HepG2 (cell line): ENCODE measurements at regions of chr19 and their contacts with region 1.

Region 1: DNA sequence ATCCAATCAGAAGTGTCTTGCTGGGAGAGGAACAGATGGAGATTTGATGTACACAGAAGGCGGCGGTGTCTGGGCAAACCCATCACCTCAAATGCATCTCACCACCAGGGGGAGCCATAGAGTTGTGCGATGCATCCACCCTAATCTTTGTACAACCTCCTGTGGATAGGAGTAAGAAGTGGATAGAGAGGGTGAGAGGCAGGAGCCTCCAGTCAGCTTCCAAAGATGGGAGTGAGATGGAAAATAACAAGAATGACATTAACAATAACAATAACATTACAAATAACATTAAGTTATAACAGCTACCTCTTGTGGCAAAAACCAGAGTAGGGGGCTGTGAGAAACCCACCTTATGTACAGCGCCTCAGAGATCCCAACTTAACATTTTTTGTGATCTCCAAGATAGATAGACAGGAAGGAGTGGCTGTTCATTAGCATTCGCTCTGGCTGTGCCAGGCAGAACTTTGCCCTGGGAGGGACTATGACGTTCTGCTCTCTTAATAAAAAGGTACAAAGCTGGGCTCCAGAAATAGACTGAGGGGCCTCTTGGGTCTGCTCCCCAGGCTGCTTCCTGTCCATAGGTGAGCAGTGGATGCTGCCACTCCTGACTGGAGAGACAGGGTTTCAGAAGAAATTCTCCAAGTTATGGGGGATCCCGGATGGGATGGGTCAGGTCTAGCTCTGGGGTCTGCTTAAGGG is 5.2 kb upstream of the CEACAM18 start:
- DNase-seq: peak; percentile 56
- ATAC-seq: peak; percentile 77
- H3K4me3 ChIP-seq: no peak overlapping the region
- H3K27ac ChIP-seq: no peak overlapping the region
- H3K4me1 ChIP-seq: peaks cover 29% of the 10 kb centered on the region
- H3K27me3 ChIP-seq: no peaks in the 10 kb centered on the region
- CTCF ChIP-seq: peak; percentile 82
- EP300 ChIP-seq: no peak
- POLR2A ChIP-seq: no peak
- RAD21 ChIP-seq: peak; percentile 56

Region 2: DNA sequence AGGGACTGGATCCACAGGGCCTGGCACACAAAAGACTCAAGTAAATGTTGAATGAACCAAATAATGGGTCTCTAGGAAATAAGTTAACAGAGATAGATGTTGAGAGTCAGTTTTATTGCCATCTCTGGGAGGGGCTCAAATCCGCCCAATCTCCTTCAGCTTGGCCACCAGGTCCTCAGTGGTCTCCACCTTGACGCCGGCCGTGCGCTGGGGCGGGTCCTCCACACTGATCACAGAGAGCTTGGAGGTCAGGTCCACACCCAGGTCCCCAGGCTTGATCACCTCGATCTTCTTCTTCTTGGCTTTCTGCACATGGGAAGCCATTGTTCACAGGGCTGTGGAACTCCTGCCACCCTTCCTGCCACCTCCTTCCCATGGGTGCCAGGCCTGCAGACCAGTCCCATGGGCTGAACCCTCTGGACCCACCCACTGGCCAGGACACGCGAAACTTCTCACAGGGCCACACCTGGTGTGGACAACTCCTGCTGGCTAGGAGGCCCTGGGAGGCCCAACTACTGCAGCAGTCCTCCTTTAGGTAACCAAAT is 128.0 kb before region 1 on chr19:
- CTCF ChIA-PET with region 1: no interaction called
- POLR2A ChIA-PET with region 1: no interaction called
- in situ Hi-C with region 1: no loop called
- intact Hi-C with region 1: no loop called
- DNase-seq: no peak
- ATAC-seq: no peak
- H3K4me3 ChIP-seq: no peak overlapping the region
- H3K27ac ChIP-seq: peak overlapping the region; percentile 34
- H3K4me1 ChIP-seq: peaks cover 97% of the 10 kb centered on the region
- H3K27me3 ChIP-seq: no peaks in the 10 kb centered on the region
- CTCF ChIP-seq: no peak
- EP300 ChIP-seq: no peak
- POLR2A ChIP-seq: peak in 1 of 2 experiments; percentile 45; a peak in 2 of 4 replicates
- RAD21 ChIP-seq: no peak

Region 3: DNA sequence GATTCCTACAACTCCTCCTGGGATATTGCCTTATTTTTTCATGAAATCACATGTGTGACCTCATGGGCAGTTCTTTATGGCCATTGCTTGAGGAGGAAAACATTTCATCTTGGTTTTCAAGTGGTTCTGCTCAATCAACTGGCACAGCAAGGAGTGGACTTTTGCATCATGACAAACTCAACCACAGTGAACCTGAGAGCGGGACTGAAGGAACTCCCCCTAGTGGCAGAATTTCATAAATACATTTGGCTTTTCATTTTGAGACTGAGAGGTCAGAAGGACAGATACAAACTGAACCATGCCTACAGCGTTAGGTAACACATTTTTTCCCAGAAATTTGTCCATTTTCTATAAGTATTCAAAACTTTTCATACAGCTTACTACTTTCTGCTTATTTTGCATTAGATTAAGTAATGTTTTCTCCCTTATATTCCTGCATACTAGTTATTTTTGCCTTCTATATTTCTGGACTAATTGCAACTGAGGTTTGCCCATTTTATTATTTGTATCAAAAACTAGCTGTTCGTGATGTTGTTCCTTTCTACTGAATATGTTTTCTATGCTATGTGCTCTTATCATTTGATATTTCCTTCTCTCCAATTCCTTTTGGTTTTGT is 41.8 kb after region 1 on chr19:
- CTCF ChIA-PET with region 1: interaction called, 51 read pairs
- POLR2A ChIA-PET with region 1: no interaction called
- in situ Hi-C with region 1: no loop called
- intact Hi-C with region 1: loop called (anchors 1 kb)
- DNase-seq: peak; percentile 46
- ATAC-seq: peak; percentile 47
- H3K4me3 ChIP-seq: no peak overlapping the region
- H3K27ac ChIP-seq: no peak overlapping the region
- H3K4me1 ChIP-seq: no peaks in the 10 kb centered on the region
- H3K27me3 ChIP-seq: no peaks in the 10 kb centered on the region
- CTCF ChIP-seq: peak; percentile 76
- EP300 ChIP-seq: no peak
- POLR2A ChIP-seq: no peak
- RAD21 ChIP-seq: no peak

Region 4: GRCh38 chr19:51637362-51637978 is 164.3 kb after region 1 on chr19:
- CTCF ChIA-PET with region 1: interaction called, 11 read pairs
- POLR2A ChIA-PET with region 1: no interaction called
- in situ Hi-C with region 1: no loop called
- intact Hi-C with region 1: no loop called
- DNase-seq: peak; percentile 33
- ATAC-seq: no peak
- H3K4me3 ChIP-seq: no peak overlapping the region
- H3K27ac ChIP-seq: no peak overlapping the region
- H3K4me1 ChIP-seq: no peaks in the 10 kb centered on the region
- H3K27me3 ChIP-seq: no peaks in the 10 kb centered on the region
- CTCF ChIP-seq: peak; percentile 53
- EP300 ChIP-seq: no peak
- POLR2A ChIP-seq: no peak
- RAD21 ChIP-seq: no peak

Region 5: DNA sequence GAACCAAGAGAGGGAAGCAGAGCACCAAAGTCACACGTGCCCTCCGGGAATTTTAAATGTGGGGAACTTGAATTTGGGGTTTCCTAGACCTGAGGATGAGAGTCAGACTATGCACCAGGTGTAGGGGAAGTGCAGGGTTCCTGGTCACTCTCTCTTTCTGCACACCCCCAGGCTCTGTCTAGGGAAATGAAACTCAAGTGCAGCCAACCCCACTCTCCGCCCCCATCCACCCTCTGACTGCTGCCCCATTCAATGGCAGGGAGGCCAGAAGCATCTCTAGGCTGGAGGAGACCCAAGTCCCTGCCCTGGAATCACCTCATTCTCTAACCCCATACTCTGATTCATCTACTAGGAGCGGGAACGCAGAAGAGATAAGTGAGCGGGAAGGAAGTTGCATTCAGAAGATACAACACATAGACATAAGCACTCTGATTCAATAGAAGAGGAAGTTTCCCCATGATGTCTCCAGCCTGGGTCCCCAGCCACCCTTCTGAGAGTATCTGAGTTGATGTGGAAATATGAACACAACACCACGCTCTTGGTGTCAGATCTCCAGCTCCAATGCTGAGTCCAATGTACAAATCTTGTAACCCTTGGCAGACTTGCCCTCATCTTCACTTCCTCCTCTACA is 178.2 kb after region 1 on chr19:
- CTCF ChIA-PET with region 1: interaction called, 11 read pairs
- POLR2A ChIA-PET with region 1: no interaction called
- in situ Hi-C with region 1: loop called (anchors 10 kb)
- intact Hi-C with region 1: loop called (anchors 2 kb)
- DNase-seq: no peak
- ATAC-seq: no peak
- H3K4me3 ChIP-seq: no peak overlapping the region
- H3K27ac ChIP-seq: no peak overlapping the region
- H3K4me1 ChIP-seq: no peaks in the 10 kb centered on the region
- H3K27me3 ChIP-seq: no peaks in the 10 kb centered on the region
- CTCF ChIP-seq: no peak
- EP300 ChIP-seq: no peak
- POLR2A ChIP-seq: no peak
- RAD21 ChIP-seq: no peak

Region 6: GRCh38 chr19:51660975-51661600 is 187.9 kb after region 1 on chr19:
- CTCF ChIA-PET with region 1: interaction called, 11 read pairs
- POLR2A ChIA-PET with region 1: no interaction called
- in situ Hi-C with region 1: loop called (anchors 10 kb)
- intact Hi-C with region 1: loop called (anchors 2 kb)
- DNase-seq: peak; percentile 54
- ATAC-seq: peak; percentile 49; the same call in 2 of the 3 replicates
- H3K4me3 ChIP-seq: no peak overlapping the region
- H3K27ac ChIP-seq: no peak overlapping the region
- H3K4me1 ChIP-seq: no peaks in the 10 kb centered on the region
- H3K27me3 ChIP-seq: no peaks in the 10 kb centered on the region
- CTCF ChIP-seq: peak; percentile 65
- EP300 ChIP-seq: no peak
- POLR2A ChIP-seq: no peak
- RAD21 ChIP-seq: no peak

Region 7: DNA sequence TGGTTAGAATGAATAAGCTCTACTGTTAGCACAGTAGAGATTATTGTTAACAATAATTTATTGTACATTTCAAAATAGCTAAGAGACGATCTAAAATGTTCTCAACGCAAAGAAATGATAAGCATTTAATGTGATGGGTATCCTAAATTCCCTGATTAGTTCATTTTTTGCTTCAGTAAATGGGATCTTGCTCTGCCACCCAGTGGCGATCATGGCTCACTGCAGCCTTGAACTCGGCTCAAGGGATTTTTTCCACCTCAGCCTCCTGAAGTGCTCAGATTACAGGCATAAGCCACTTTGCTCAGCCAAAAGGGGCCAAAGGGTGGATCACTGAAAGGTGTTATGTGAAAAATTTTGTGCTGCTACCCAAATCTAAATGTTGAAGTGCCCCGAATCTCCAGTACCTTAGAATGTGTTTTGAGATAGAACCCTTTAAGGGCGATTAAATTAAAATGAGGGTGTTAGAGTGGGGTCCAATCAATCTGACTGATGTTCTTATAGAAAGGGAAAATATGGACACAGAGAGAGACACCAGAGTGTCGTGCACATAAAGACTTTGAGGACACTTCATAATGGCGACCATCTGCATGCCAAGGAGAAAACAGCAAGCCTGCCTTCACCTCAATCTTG is 764.7 kb after region 1 on chr19:
- CTCF ChIA-PET with region 1: no interaction called
- POLR2A ChIA-PET with region 1: no interaction called
- in situ Hi-C with region 1: no loop called
- intact Hi-C with region 1: loop called (anchors 10 kb)
- DNase-seq: peak; percentile 52
- ATAC-seq: peak; percentile 66
- H3K4me3 ChIP-seq: no peak overlapping the region
- H3K27ac ChIP-seq: no peak overlapping the region
- H3K4me1 ChIP-seq: peaks cover 10% of the 10 kb centered on the region
- H3K27me3 ChIP-seq: no peaks in the 10 kb centered on the region
- CTCF ChIP-seq: peak; percentile 85
- EP300 ChIP-seq: no peak
- POLR2A ChIP-seq: no peak
- RAD21 ChIP-seq: peak; percentile 69